ENCODE measurements at regions of chr7 and their contacts with region 1.

Region 1: GRCh38 chr7:129136887-129137642 is 7.4 kb upstream of the TSPAN33 start:
- DNase-seq: no peak
- ATAC-seq: no peak
- H3K4me3 ChIP-seq: no peak overlapping the region
- H3K27ac ChIP-seq: peak overlapping the region in 1 of 10 donors; percentile 45
- H3K4me1 ChIP-seq: peaks cover 0 to 24% (median 0%) of the 10 kb centered on the region in 9 donors
- H3K27me3 ChIP-seq: peaks cover 0 to 9% (median 0%) of the 10 kb centered on the region in 7 donors
- CTCF ChIP-seq: no peak

Region 2: GRCh38 chr7:129072479-129073011 is 64.5 kb before region 1 on chr7:
- intact Hi-C with region 1: loop called in 1 of 10 experiments (anchors 10 kb)
- DNase-seq: no peak
- ATAC-seq: no peak
- H3K4me3 ChIP-seq: no peak overlapping the region
- H3K27ac ChIP-seq: peak overlapping the region in 1 of 10 donors; percentile 44
- H3K4me1 ChIP-seq: peaks cover 0 to 26% (median 0%) of the 10 kb centered on the region in 9 donors
- H3K27me3 ChIP-seq: peaks cover 0 to 32% (median 8%) of the 10 kb centered on the region in 7 donors
- CTCF ChIP-seq: no peak

Region 3: GRCh38 chr7:129150199-129150996 is 13.3 kb after region 1 on chr7:
- intact Hi-C with region 1: no loop called
- DNase-seq: no peak
- ATAC-seq: peak in 5 of 8 donors; percentile 12 to 47 (median 35)
- H3K4me3 ChIP-seq: no peak overlapping the region
- H3K27ac ChIP-seq: peak overlapping the region in 2 of 10 donors; percentile 2 to 35
- H3K4me1 ChIP-seq: peaks cover 0 to 47% (median 11%) of the 10 kb centered on the region in 9 donors
- H3K27me3 ChIP-seq: peaks cover 0 to 15% (median 0%) of the 10 kb centered on the region in 7 donors
- CTCF ChIP-seq: no peak

Region 4: DNA sequence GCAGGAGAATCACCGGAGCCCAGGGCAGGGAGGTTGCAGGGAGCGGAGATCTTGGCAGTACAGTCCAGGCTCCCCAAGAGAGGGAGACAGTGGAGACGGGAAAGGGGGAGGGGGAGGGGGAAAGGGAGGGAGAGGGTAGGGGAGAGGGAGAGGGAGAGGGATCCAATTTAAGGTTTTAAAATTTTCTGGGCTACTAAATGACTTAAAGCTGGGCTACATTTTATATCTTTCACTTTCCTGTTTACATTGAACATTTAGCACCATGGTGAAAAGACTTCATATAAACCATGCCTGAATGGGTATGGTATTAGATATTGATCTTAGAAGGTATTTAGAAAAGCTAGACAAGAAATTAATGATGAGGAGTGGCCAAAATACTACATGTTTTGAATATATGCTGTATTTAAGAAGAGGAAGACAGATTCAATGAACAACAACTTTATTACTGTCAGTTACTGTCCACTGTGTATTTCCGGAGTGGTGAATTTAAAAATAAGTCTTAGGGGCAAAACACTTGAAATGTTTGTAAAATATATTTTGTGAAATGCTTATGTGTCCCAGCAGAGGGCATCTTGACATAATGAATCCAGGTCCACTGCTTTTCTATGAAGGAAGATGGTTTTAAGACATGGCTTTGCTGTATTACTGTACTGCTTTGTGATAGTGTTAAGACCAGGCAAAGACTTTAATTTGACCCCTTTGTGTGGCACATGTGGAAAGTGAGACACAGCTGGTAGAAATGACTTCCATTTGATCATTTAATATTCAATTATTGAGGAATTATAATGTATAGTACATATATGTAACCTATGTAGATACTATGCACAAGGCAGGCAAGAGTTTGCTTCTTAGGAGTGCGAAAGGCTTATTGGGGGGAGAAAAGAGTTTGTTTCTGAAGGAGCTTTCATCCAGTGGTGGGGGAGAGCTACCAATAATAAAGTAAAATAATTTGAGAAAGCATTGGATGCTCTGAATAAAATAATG is 527.3 kb after region 1 on chr7:
- intact Hi-C with region 1: no loop called
- DNase-seq: no peak
- ATAC-seq: peak in 3 of 8 donors; percentile 24 to 33 (median 31)
- H3K4me3 ChIP-seq: no peak overlapping the region
- H3K27ac ChIP-seq: no peak overlapping the region
- H3K4me1 ChIP-seq: peaks cover 0 to 9% (median 0%) of the 10 kb centered on the region in 9 donors
- H3K27me3 ChIP-seq: no peaks in the 10 kb centered on the region
- CTCF ChIP-seq: peak in 8 of 9 donors; percentile 13 to 64 (median 52)

Measured in heart right ventricle (tissue), 16 donors.